ENCODE measurements at regions of chr2 and their contacts with region 1.

Region 1: DNA sequence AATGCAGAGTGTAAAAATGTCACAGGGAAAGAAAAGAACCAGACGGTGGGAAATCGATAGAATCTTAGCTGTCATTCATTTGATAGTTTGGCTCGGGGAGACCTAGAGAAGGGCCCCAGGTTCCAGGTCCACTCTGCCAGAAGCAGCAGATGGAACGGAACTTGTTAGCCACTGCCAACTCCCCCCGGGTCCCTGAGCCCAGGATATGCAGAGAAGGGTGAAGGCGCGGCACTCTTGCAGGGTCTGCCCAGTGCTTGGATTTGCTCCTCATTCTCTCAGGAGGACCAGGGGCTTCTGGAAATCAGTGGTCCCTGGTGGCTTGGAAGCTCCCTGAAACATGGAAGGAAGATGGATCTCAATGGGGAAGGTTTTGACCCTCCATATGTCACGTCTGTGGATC is 11.6 kb upstream of the XDH start:
- DNase-seq: no peak
- ATAC-seq: no peak
- H3K4me3 ChIP-seq: no peak overlapping the region
- H3K27ac ChIP-seq: no peak overlapping the region
- H3K4me1 ChIP-seq: peaks cover 10% of the 10 kb centered on the region; the same call in 1 of the 3 replicates
- CTCF ChIP-seq: no peak
- EP300 ChIP-seq: no peak
- POLR2A ChIP-seq: no peak
- RAD21 ChIP-seq: no peak

Region 2: GRCh38 chr2:31413862-31414550 is 12.1 kb before region 1 on chr2:
- CTCF ChIA-PET with region 1: interaction called, 12 read pairs
- POLR2A ChIA-PET with region 1: no interaction called
- DNase-seq: peak in 1 of 2 experiments; percentile 36
- ATAC-seq: peak; percentile 51 to 80; a peak in 4 of 6 replicates
- H3K4me3 ChIP-seq: 0 out of 3 replicates have a peak overlapping the region, but pooled peaks have one; percentile 5
- H3K27ac ChIP-seq: peak overlapping the region; percentile 58 to 76
- H3K4me1 ChIP-seq: peaks cover 50% of the 10 kb centered on the region
- CTCF ChIP-seq: peak; percentile 58
- EP300 ChIP-seq: no peak
- POLR2A ChIP-seq: no peak
- RAD21 ChIP-seq: peak; percentile 58 to 64

Region 3: DNA sequence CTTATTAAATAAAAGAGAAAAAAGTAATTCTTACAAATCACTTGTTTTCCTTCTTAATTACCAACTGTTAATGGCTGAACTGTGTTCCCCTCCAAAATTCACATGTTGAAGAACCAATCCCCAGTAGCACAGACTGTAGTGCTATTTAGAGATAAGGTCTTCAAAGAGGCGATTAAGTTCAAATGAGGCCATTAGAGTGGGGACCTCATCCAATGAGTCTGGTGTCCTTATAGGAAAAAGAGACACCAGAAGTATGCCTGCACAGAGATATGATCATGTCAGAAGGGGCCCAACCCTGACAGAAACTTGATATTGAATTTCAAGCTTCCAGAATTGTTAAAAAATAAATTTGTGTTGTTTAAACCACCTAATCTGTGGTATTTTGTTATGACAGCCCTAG is 494.9 kb after region 1 on chr2:
- CTCF ChIA-PET with region 1: no interaction called
- POLR2A ChIA-PET with region 1: no interaction called
- DNase-seq: no peak
- ATAC-seq: no peak
- H3K4me3 ChIP-seq: no peak overlapping the region
- H3K27ac ChIP-seq: no peak overlapping the region
- H3K4me1 ChIP-seq: no peaks in the 10 kb centered on the region
- CTCF ChIP-seq: no peak
- EP300 ChIP-seq: no peak
- POLR2A ChIP-seq: no peak
- RAD21 ChIP-seq: no peak